WTC11 (cell line): ENCODE measurements at regions of chr3 and their contacts with region 1.

Region 1: GRCh38 chr3:141360888-141361598 is 7.3 kb upstream of the ZBTB38 start:
- DNase-seq: no peak
- ATAC-seq: peak; percentile 86
- H3K4me3 Mint-ChIP-seq: no peak overlapping the region; the same call in 1 of the 2 replicates
- H3K27ac Mint-ChIP-seq: peak overlapping the region; percentile 26; the same call in 1 of the 2 replicates
- H3K4me1 Mint-ChIP-seq: peaks cover 13% of the 10 kb centered on the region
- H3K27me3 Mint-ChIP-seq: no peaks in the 10 kb centered on the region
- CTCF ChIP-seq: 0 out of 2 replicates have a peak, but pooled peaks have one; percentile 15

Region 2: GRCh38 chr3:141348837-141349236 is 12.2 kb before region 1 on chr3:
- CTCF ChIA-PET with region 1: interaction called, 10 read pairs
- POLR2A ChIA-PET with region 1: no interaction called
- DNase-seq: no peak
- ATAC-seq: no peak
- H3K4me3 Mint-ChIP-seq: no peak overlapping the region
- H3K27ac Mint-ChIP-seq: no peak overlapping the region
- H3K4me1 Mint-ChIP-seq: peaks cover 7% of the 10 kb centered on the region
- H3K27me3 Mint-ChIP-seq: peaks cover 2% of the 10 kb centered on the region
- CTCF ChIP-seq: no peak

Region 3: GRCh38 chr3:141426404-141427034 is 65.5 kb after region 1 on chr3:
- CTCF ChIA-PET with region 1: interaction called, 13 read pairs
- POLR2A ChIA-PET with region 1: no interaction called
- DNase-seq: no peak
- ATAC-seq: peak; percentile 30
- H3K4me3 Mint-ChIP-seq: no peak overlapping the region
- H3K27ac Mint-ChIP-seq: no peak overlapping the region
- H3K4me1 Mint-ChIP-seq: peaks cover 19% of the 10 kb centered on the region
- H3K27me3 Mint-ChIP-seq: no peaks in the 10 kb centered on the region
- CTCF ChIP-seq: no peak

Region 4: GRCh38 chr3:141441381-141442364 is 80.6 kb after region 1 on chr3:
- CTCF ChIA-PET with region 1: interaction called, 29 read pairs
- POLR2A ChIA-PET with region 1: no interaction called
- DNase-seq: peak; percentile 75
- ATAC-seq: peak; percentile 97
- H3K4me3 Mint-ChIP-seq: no peak overlapping the region
- H3K27ac Mint-ChIP-seq: 0 out of 2 replicates have a peak overlapping the region, but pooled peaks have one; percentile 79
- H3K4me1 Mint-ChIP-seq: peaks cover 8% of the 10 kb centered on the region
- H3K27me3 Mint-ChIP-seq: no peaks in the 10 kb centered on the region
- CTCF ChIP-seq: peak; percentile 77

Region 5: GRCh38 chr3:141460097-141460704 is 99.2 kb after region 1 on chr3:
- CTCF ChIA-PET with region 1: interaction called, 87 read pairs
- POLR2A ChIA-PET with region 1: no interaction called
- DNase-seq: peak; percentile 93
- ATAC-seq: peak; percentile 99
- H3K4me3 Mint-ChIP-seq: no peak overlapping the region
- H3K27ac Mint-ChIP-seq: no peak overlapping the region
- H3K4me1 Mint-ChIP-seq: peaks cover 11% of the 10 kb centered on the region
- H3K27me3 Mint-ChIP-seq: peaks cover 4% of the 10 kb centered on the region
- CTCF ChIP-seq: peak; percentile 57